Right cardiac atrium (tissue), 5 donors: ENCODE measurements at regions of chr2 and their contacts with region 1.

Region 1: GRCh38 chr2:172596776-172597175 is 40.9 kb downstream of the PDK1 start:
- DNase-seq: no peak
- ATAC-seq: no peak
- H3K4me3 ChIP-seq: no peak overlapping the region
- H3K27ac ChIP-seq: no peak overlapping the region
- H3K4me1 ChIP-seq: no peaks in the 10 kb centered on the region
- H3K27me3 ChIP-seq: no peaks in the 10 kb centered on the region

Region 2: GRCh38 chr2:171244970-171245782 is 1351.6 kb before region 1 on chr2:
- intact Hi-C with region 1: no loop called
- DNase-seq: no peak
- ATAC-seq: no peak
- H3K4me3 ChIP-seq: no peak overlapping the region
- H3K27ac ChIP-seq: no peak overlapping the region
- H3K4me1 ChIP-seq: no peaks in the 10 kb centered on the region
- H3K27me3 ChIP-seq: no peaks in the 10 kb centered on the region

Region 3: GRCh38 chr2:172442072-172442895 is 154.5 kb before region 1 on chr2:
- intact Hi-C with region 1: no loop called
- DNase-seq: peak in 2 of 3 donors; percentile 47 to 54
- ATAC-seq: peak; percentile 59 to 93
- H3K4me3 ChIP-seq: no peak overlapping the region
- H3K27ac ChIP-seq: no peak overlapping the region
- H3K4me1 ChIP-seq: peaks cover 17% of the 10 kb centered on the region
- H3K27me3 ChIP-seq: no peaks in the 10 kb centered on the region

Region 4: GRCh38 chr2:172540421-172540820 is 56.4 kb before region 1 on chr2:
- intact Hi-C with region 1: no loop called
- DNase-seq: no peak
- ATAC-seq: no peak
- H3K4me3 ChIP-seq: no peak overlapping the region
- H3K27ac ChIP-seq: no peak overlapping the region
- H3K4me1 ChIP-seq: no peaks in the 10 kb centered on the region
- H3K27me3 ChIP-seq: no peaks in the 10 kb centered on the region

Region 5: GRCh38 chr2:172655091-172655837 is 58.5 kb after region 1 on chr2:
- intact Hi-C with region 1: no loop called
- DNase-seq: no peak
- ATAC-seq: no peak
- H3K4me3 ChIP-seq: no peak overlapping the region
- H3K27ac ChIP-seq: no peak overlapping the region
- H3K4me1 ChIP-seq: no peaks in the 10 kb centered on the region
- H3K27me3 ChIP-seq: no peaks in the 10 kb centered on the region

Region 6: DNA sequence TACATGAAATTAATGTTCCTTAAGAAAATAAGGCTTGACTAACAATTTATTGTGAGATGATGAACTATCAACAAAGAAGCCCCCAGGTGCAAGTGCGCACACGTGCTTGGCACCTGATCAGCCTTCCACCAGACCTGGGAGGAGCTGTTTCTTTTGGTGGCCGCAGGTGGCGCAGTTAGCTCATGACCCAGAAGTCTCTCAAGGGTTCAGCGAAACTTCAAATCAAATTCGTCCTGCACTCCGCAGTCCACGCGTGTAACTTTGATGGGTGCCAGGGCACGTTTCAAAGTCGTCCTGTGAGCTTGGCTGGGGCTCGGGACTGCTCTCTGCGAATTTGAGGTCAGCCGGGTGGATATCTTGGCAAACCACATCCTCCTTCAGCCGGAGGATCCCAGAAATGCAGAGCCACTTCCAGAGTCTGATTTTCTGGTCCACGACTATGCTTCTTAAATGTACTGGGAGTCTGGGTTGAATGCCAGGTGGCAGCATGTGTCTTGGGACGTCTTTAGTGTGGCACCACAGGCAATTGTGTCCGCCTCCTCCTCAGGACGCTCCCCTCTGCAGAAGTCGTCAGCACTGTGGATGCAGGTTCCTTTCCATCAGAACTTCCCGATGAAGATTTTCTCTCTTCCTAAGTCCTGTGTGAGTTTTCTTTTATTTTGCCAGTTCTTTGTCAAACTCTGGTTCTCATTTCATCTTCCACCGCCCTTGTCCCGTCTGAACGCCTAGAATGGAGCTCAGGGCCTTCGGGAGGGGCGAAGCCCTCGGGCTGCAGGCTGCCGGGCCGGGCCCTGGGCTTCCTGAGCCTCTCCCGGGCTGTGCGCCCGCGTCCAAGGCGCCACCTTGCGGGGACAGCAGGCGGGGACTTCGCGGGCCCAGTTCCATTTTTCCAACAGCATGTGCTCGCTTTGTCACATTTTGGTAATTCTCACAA is 77.5 kb after region 1 on chr2:
- intact Hi-C with region 1: loop called in 1 of 4 experiments (anchors 10 kb)
- DNase-seq: peak; percentile 49 to 84 (median 72)
- ATAC-seq: peak; percentile 83 to 86
- H3K4me3 ChIP-seq: no peak overlapping the region
- H3K27ac ChIP-seq: no peak overlapping the region
- H3K4me1 ChIP-seq: no peaks in the 10 kb centered on the region
- H3K27me3 ChIP-seq: no peaks in the 10 kb centered on the region

Region 7: DNA sequence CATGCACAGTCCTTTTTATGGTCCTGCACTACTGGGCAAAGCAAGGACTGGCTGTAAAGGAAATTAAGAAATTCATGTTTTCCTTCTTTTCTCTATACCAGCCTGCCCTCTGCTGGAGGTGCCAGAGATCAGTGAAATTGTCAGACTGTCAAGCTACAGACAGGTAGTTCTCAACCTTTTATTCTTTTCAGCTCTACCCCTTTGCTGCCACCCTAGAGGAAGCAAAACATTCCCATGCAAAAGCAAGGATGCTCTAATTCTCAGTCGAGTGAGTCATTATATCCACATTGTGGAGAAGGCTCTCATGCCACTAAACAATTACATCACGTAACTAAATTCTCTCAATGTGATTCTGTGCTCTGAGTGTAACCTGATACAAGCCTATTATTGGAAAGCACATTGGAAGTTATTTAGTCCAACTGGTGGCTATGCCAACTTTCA is 113.8 kb after region 1 on chr2:
- intact Hi-C with region 1: loop called in 2 of 4 experiments (anchors 5 to 10 kb)
- DNase-seq: peak in 1 of 3 donors; percentile 42
- ATAC-seq: peak; percentile 46 to 72
- H3K4me3 ChIP-seq: no peak overlapping the region
- H3K27ac ChIP-seq: no peak overlapping the region
- H3K4me1 ChIP-seq: no peaks in the 10 kb centered on the region
- H3K27me3 ChIP-seq: no peaks in the 10 kb centered on the region